ENCODE measurements at regions of chr1 and their contacts with region 1.

Region 1: GRCh38 chr1:27603681-27604578 is at the start of gene AHDC1:
- DNase-seq: peak; percentile 85 to 95 (median 90)
- ATAC-seq: peak; percentile 85 to 87
- H3K4me3 Mint-ChIP-seq: peak within 1 kb of the TSS; percentile 89 to 96 (median 92)
- H3K27ac Mint-ChIP-seq: peak within 1 kb of the TSS; percentile 73 to 98 (median 91)
- H3K4me1 Mint-ChIP-seq: peaks cover 26 to 55% (median 37%) of the 10 kb centered on the region in 4 donors
- H3K27me3 Mint-ChIP-seq: no peaks in the 10 kb centered on the region
- polyA plus RNA-seq, gene AHDC1: 0.57 to 2.4 (median 1.0) TPM

Region 2: DNA sequence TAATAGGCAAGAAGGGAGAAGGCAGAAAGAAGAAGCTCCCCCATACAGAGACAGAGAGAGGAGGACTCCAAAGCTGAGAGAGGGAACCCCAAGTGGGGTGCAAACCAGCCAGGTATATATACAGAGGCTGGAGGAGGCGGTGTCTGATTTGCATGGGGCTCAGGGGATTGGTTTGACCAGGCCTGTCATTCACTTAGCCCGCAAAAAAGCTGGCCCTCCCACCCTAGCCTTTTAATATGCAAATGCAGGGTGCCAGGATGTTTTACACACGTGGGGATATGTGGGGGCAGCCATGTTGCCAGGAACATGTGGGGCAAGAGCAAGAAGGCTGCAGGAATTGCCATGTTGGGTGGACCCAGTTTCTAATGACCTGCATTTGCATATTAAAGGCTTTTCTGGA is 554.3 kb before region 1 on chr1:
- POLR2A ChIA-PET with region 1: no interaction called
- DNase-seq: no peak
- ATAC-seq: no peak
- H3K4me3 Mint-ChIP-seq: no peak overlapping the region
- H3K27ac Mint-ChIP-seq: no peak overlapping the region
- H3K4me1 Mint-ChIP-seq: peaks cover 12 to 18% (median 17%) of the 10 kb centered on the region in 4 donors
- H3K27me3 Mint-ChIP-seq: no peaks in the 10 kb centered on the region

Region 3: DNA sequence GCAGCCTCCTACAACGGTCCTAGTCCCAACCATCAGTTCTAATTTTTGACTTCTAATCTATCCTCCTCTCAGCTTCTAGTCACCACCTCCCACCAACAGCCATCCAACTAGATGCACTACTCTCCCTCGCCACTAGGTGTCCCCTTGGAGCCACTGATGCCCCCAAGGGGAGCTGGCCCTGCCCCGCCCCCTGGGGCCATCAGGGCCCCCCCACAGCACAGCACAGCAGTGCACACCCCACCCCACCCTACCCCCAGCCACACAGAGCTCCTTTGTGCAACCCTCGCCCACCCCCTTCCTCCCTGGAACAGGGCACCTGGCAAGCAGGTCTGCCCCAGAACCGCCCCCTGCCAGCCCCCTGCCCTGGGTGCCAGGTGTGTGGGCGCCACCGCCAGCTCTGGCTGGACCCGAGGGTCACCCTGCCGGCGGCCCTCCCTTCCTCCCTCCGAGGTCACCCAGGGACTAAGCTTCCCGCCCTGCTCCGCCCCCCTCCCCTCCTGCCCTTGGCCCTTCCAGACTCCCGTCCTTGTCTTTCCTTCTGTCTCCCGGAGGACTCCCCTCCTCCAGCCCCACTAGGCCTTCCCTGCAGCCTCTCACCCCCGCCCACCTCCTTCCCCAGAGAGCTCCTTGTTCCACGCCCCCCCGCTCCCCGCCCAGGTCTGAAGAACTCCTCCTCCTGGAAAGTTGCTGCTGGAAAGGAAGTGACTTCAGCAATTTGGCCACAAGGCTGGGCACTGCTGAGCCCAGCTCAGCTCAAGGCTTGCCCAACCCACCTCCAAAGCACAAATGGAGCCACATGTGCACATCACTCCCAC is 46.9 kb before region 1 on chr1:
- POLR2A ChIA-PET with region 1: interaction called, 22 read pairs
- DNase-seq: peak; percentile 60 to 84 (median 74)
- ATAC-seq: peak; percentile 86 to 94
- H3K4me3 Mint-ChIP-seq: peak overlapping the region in 9 of 10 donors; percentile 7 to 76 (median 52)
- H3K27ac Mint-ChIP-seq: peak overlapping the region; percentile 72 to 88 (median 84)
- H3K4me1 Mint-ChIP-seq: peaks cover 25 to 61% (median 50%) of the 10 kb centered on the region in 4 donors
- H3K27me3 Mint-ChIP-seq: no peaks in the 10 kb centered on the region